ENCODE measurements at regions of chr20 and their contacts with region 1.

Region 1: GRCh38 chr20:25360635-25361286 is 29.9 kb downstream of the ABHD12 start:
- DNase-seq: no peak
- ATAC-seq: no peak
- H3K4me3 ChIP-seq: no peak overlapping the region
- H3K27ac ChIP-seq: no peak overlapping the region
- H3K4me1 ChIP-seq: no peaks in the 10 kb centered on the region
- H3K27me3 ChIP-seq: no peaks in the 10 kb centered on the region
- CTCF ChIP-seq: no peak
- POLR2A ChIP-seq: no peak

Region 2: DNA sequence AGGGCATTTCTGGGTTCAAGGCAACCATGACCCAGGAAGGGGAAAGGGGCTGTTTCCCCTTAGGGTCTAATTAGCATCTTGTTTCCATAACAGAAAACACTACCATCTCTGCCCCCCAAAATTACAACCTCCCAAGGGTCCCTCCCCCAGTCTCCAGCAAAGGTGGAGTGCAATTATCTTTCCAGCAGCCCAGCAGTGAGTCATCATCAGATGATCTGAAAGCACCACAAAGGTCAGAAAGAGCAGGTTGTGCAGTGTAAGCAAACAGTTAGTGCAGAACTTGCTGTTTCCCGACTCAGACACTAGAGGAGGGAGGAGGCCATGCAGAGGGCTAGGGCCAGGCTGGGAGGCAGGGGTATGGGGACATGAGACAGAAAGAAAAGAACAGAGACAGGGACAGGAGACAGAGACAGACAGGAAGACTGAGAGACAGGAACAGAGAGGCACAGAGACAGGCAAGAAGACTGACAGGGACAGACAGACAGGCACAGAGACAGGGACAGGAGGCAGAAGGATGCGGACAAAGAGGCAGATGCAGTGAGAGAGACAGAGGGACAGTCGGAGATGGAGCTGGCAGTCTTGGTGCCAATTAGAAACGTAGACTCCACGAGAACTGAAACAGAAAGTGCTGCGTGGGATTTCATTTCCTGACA is 50.4 kb before region 1 on chr20:
- in situ Hi-C with region 1: no loop called
- intact Hi-C with region 1: no loop called
- DNase-seq: peak; percentile 40 to 66
- ATAC-seq: peak; percentile 85 to 94
- H3K4me3 ChIP-seq: peak overlapping the region in 2 of 4 donors; percentile 17 to 24
- H3K27ac ChIP-seq: peak overlapping the region; percentile 55 to 72 (median 59)
- H3K4me1 ChIP-seq: peaks cover 18% of the 10 kb centered on the region in 2 donors
- H3K27me3 ChIP-seq: no peaks in the 10 kb centered on the region
- CTCF ChIP-seq: peak in 3 of 5 experiments; percentile 14 to 36 (median 32)
- POLR2A ChIP-seq: peak in 1 of 2 donors; percentile 21

Region 3: GRCh38 chr20:25470045-25470444 is 109.3 kb after region 1 on chr20:
- in situ Hi-C with region 1: loop called in 1 of 4 experiments (anchors 25 kb)
- intact Hi-C with region 1: no loop called
- DNase-seq: no peak
- ATAC-seq: no peak
- H3K4me3 ChIP-seq: no peak overlapping the region
- H3K27ac ChIP-seq: no peak overlapping the region
- H3K4me1 ChIP-seq: no peaks in the 10 kb centered on the region
- H3K27me3 ChIP-seq: no peaks in the 10 kb centered on the region
- CTCF ChIP-seq: no peak
- POLR2A ChIP-seq: no peak

Region 4: GRCh38 chr20:25496968-25497640 is 136.3 kb after region 1 on chr20:
- in situ Hi-C with region 1: no loop called
- intact Hi-C with region 1: no loop called
- DNase-seq: no peak
- ATAC-seq: no peak
- H3K4me3 ChIP-seq: no peak overlapping the region
- H3K27ac ChIP-seq: no peak overlapping the region
- H3K4me1 ChIP-seq: no peaks in the 10 kb centered on the region
- H3K27me3 ChIP-seq: no peaks in the 10 kb centered on the region
- CTCF ChIP-seq: no peak
- POLR2A ChIP-seq: no peak

Measured in gastrocnemius medialis (tissue), 4 donors.